ENCODE measurements at regions of chr16 and their contacts with region 1.

Region 1: DNA sequence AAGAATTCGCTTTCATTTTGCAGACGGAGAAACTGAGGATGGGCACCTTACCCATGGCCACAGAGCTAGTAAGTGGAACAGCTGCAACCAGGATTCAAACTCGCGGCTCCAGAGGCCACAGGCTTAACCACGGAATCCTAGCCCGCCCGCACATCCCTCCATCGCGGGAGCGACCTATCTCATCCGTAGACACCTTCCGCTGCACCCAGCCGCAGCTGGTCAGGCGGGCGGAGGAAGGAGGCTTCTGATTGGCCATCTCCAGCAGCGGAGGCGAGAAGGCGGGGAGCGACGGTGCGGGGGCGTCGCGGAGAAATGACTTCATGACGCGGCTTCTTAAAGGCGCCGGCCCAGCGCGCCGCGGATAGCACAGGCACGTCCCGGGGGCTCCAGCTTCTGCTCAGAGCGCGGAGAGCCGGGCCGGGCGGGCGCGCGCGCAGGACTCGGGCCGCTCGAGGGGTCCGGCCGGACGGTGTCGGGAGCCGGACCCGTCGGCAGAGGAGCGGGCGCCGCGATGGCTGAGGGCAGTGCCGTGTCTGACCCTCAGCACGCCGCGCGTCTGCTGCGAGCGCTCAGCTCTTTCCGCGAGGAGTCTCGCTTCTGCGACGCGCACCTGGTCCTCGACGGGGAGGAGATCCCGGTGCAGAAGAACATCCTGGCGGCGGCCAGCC is at the start of gene GAN:
- DNase-seq: peak; percentile 91 to 98 (median 96)
- H3K4me3 ChIP-seq: peak within 1 kb of the TSS; percentile 64 to 98 (median 88)
- H3K27ac ChIP-seq: peak within 1 kb of the TSS in 57 of 59 donors; percentile 9 to 91 (median 77)
- H3K27me3 ChIP-seq: no peaks in the 10 kb centered on the region
- CTCF ChIP-seq: peak in 36 of 56 donors; percentile 5 to 59 (median 23)
- total RNA-seq, gene GAN: 31.2 to 66.5 (median 46.5) TPM

Region 2: DNA sequence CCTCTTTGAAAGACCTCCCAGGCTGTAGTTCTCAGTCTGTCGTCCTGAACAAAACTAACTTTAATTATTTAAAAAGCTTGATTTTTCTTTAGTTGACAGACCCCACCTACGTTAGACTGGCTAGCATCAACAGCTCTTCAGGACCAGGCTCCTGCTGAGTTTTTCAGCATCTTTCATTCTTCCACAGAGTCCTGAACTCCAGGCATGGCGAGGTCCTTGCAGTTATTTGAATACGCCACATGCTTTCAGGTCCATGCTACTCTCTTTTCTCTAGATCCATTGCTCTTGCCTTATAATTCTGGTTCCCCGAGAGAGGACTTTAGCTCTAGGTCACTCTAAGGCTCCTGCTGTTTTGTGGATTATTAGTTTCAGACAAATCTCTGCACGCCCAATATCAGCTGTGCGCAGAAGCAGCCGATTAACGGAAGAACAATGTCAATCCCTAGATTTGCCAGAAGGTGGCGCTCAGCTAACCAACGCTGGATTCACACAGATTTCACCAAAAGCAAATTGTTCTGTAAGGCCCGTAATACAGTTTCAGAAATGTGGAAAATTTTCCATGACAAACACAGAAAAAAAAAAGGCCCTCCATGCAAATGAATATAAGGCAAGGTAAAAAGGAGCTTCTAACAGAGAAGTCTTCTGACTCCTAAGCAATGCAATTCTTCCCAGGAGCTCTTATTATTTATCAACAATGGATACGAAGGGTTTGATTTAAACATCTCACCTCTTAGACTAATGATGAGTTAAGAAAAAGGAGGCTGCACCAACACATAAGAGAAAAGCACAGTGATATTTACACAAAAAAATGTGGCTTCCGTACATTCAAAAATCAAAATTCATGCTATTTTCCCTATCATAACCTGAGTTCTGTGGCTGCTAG is 109.7 kb before region 1 on chr16:
- intact Hi-C with region 1: loop called (anchors 5 to 10 kb)
- DNase-seq: peak in 4 of 10 donors; percentile 9 to 56 (median 43)
- H3K4me3 ChIP-seq: peak overlapping the region in 1 of 59 donors; percentile 33
- H3K27ac ChIP-seq: peak overlapping the region in 24 of 59 donors; percentile 0 to 82 (median 54)
- H3K27me3 ChIP-seq: peaks cover 0 to 4% (median 0%) of the 10 kb centered on the region in 45 donors
- CTCF ChIP-seq: peak; percentile 46 to 87 (median 74)

Region 3: GRCh38 chr16:81335669-81336068 is 20.9 kb after region 1 on chr16:
- intact Hi-C with region 1: no loop called
- DNase-seq: no peak
- H3K4me3 ChIP-seq: no peak overlapping the region
- H3K27ac ChIP-seq: no peak overlapping the region
- H3K27me3 ChIP-seq: no peaks in the 10 kb centered on the region
- CTCF ChIP-seq: no peak

Region 4: GRCh38 chr16:81376880-81377279 is 62.1 kb after region 1 on chr16:
- intact Hi-C with region 1: no loop called
- DNase-seq: no peak
- H3K4me3 ChIP-seq: no peak overlapping the region
- H3K27ac ChIP-seq: no peak overlapping the region
- H3K27me3 ChIP-seq: no peaks in the 10 kb centered on the region
- CTCF ChIP-seq: no peak

Region 5: DNA sequence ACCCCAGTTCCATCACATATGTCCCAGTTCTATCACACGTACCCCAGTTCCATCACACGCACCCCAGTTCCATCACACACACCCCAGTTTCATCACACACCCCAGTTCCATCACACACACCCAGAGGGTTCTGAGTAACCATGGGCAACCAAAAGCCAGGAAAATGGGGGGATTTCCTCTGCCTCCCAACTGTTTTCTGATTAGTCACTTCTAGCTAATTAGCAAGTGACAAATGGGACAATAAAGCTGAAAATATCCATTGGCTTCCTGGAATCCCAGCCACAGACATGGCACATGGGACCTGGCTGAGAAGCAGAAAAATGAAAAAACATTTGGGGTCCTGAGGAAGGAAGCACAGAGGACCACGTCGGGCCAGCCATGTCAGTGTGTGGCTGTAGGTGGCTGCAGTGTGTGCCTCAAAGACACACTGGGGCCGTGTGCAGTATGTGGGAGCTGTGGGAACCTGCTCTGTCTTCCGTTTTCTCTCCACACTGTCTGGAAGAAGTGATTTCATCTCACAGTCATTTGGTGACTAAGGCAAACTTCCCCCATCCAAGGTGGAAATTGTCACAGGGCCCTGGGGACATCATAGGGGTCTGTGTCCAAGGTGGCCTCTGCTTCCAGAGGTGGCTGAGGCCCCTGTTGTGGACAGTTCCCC is 236.5 kb after region 1 on chr16:
- intact Hi-C with region 1: no loop called
- DNase-seq: no peak
- H3K4me3 ChIP-seq: no peak overlapping the region
- H3K27ac ChIP-seq: peak overlapping the region in 1 of 59 donors; percentile 30
- H3K27me3 ChIP-seq: no peaks in the 10 kb centered on the region
- CTCF ChIP-seq: no peak

Region 6: GRCh38 chr16:82694239-82694863 is 1379.6 kb after region 1 on chr16:
- intact Hi-C with region 1: no loop called
- DNase-seq: no peak
- H3K4me3 ChIP-seq: no peak overlapping the region
- H3K27ac ChIP-seq: no peak overlapping the region
- H3K27me3 ChIP-seq: no peaks in the 10 kb centered on the region
- CTCF ChIP-seq: no peak

Measured in dorsolateral prefrontal cortex (tissue), 120 donors.